H1 (cell line): ENCODE measurements at regions of chr2 and their contacts with region 1.

Region 1: DNA sequence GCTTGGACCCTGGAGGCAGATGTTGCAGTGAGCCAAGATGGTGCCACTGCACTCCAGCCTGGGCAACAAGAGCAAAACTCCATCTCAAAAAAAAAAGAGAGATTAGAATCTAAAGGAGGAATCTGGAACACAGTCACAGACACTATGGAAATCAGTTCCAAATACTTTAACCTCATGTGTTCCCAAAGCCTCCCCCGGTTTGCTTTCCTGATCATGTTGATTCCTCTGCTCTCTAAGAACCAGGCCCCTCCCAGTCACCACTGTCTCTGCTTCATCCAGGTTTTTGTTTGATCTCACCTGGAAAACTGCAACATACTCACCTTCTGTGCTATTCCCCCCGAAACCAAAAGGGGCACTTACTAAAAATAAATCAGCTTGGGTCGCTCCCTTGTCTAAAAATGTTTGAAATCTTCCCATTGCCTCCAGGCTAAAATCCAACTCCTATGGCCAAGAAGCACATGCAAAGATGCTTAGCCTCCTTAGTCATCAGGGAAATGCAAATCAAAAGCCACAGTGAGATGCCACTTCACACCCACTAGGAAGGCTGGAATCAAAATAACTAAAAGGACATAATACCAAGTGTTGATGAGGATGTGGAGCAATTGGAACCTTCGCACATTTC is 6.2 kb upstream of the NEU2 start:
- DNase-seq: no peak
- H3K4me3 ChIP-seq: no peak overlapping the region
- H3K27ac ChIP-seq: no peak overlapping the region
- H3K4me1 ChIP-seq: no peaks in the 10 kb centered on the region
- H3K27me3 ChIP-seq: no peaks in the 10 kb centered on the region
- CTCF ChIP-seq: no peak
- EP300 ChIP-seq: no peak
- POLR2A ChIP-seq: no peak
- RAD21 ChIP-seq: no peak

Region 2: DNA sequence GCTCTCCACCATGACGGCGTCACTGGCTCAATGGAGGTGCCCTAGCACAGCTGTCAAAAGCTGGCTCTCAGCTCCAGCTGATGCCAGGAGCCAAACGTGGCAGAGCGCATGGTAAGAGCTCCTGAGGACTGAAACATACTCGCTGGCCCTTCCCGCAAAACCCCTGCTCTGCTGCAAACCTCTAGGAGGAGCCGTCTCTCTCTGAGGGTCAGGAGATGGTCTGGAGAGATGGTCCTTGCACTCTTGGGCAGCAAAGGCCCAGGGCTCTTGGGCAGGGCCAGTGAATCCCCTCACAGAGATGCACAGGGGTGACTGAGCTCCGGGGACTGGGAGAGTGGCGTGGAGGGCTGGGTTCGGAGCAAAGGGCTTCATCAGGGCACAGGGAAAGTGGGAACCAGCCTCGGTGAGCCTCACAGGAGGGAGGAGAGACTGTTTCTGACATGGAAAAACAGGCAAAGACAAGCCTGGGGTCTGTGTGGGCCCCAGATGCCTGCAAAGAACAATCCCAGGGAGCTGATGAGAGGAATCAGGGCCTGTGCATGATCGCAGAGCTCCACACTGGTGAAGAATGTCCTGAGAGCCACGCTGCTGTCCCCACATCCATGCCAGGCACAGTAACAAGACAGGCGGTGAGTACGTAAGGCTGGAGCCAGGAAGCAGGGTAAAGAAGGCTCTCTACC is 139.0 kb before region 1 on chr2:
- CTCF ChIA-PET with region 1: interaction called, 10 read pairs
- POLR2A ChIA-PET with region 1: interaction called, 3 read pairs
- DNase-seq: no peak
- H3K4me3 ChIP-seq: no peak overlapping the region
- H3K27ac ChIP-seq: no peak overlapping the region
- H3K4me1 ChIP-seq: peaks cover 0 to 16% (median 10%) of the 10 kb centered on the region in 4 experiments; a peak in 6 of 7 replicates
- H3K27me3 ChIP-seq: no peaks in the 10 kb centered on the region
- CTCF ChIP-seq: peak in 2 of 3 experiments; percentile 67 to 70; a peak in 3 of 4 replicates
- EP300 ChIP-seq: no peak
- POLR2A ChIP-seq: no peak
- RAD21 ChIP-seq: peak; percentile 63 to 78